ENCODE measurements at regions of chr22 and their contacts with region 1.

Region 1: GRCh38 chr22:33070600-33070999 is 12.4 kb upstream of the SYN3 start:
- DNase-seq: no peak
- H3K4me3 ChIP-seq: no peak overlapping the region
- H3K27ac ChIP-seq: no peak overlapping the region
- H3K4me1 ChIP-seq: peaks cover 0 to 4% (median 0%) of the 10 kb centered on the region in 4 experiments; a peak in 1 of 7 replicates
- H3K27me3 ChIP-seq: no peaks in the 10 kb centered on the region; a peak in 2 of 7 replicates
- CTCF ChIP-seq: no peak
- EP300 ChIP-seq: no peak
- POLR2A ChIP-seq: no peak
- RAD21 ChIP-seq: no peak

Region 2: GRCh38 chr22:33083212-33083611 is 12.6 kb after region 1 on chr22:
- CTCF ChIA-PET with region 1: interaction called, 17 read pairs
- POLR2A ChIA-PET with region 1: no interaction called
- DNase-seq: no peak
- H3K4me3 ChIP-seq: no peak overlapping the region
- H3K27ac ChIP-seq: no peak overlapping the region
- H3K4me1 ChIP-seq: no peaks in the 10 kb centered on the region
- H3K27me3 ChIP-seq: no peaks in the 10 kb centered on the region
- CTCF ChIP-seq: peak in 1 of 3 experiments; percentile 32; a peak in 1 of 4 replicates
- EP300 ChIP-seq: no peak
- POLR2A ChIP-seq: no peak
- RAD21 ChIP-seq: no peak

Measured in H1 (cell line).